WTC11 (cell line): ENCODE measurements at regions of chr21 and their contacts with region 1.

Region 1: DNA sequence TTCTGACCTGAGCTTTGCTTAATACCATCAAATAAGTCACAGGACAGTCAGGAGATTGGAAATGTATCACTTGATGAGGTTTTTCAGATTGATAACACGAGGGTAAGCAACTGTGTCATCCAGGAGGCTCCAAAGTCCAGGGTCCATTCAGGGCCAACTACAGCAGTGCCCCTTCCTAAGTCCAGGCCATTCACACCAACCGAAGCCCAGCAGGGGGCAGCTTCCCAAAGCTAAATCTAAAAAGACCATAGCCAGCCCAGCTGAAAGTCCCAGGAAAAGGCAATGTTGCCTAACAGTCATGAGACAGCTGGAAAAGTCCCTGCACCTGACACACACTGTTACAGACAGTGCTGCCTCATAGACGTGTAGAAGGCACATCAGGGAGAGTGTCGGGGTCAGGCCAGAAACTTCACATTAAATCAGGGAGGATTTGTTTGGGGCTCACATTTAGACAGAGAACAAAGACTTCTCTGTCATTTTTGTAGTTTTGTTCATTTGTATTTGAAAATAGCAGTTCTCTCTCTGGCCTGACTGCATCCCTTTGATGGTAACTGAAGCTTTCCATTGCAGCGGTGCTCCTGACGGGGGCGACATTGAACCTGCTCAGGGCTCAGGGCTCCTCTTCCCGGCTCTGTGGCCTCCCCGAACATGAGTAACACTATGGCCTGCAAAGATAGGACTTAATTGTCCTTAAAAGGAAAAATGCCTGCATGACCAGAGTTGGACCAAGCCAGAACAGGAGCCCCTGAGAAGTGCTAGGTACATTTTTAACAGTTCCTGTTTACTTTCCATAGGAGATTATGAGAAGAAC is 200.4 kb downstream of the NRIP1 start:
- DNase-seq: peak; percentile 77
- ATAC-seq: peak; percentile 99
- H3K4me3 Mint-ChIP-seq: no peak overlapping the region
- H3K27ac Mint-ChIP-seq: no peak overlapping the region
- H3K4me1 Mint-ChIP-seq: peaks cover 26% of the 10 kb centered on the region
- H3K27me3 Mint-ChIP-seq: no peaks in the 10 kb centered on the region; the same call in none of the 2 replicates
- CTCF ChIP-seq: no peak

Region 2: DNA sequence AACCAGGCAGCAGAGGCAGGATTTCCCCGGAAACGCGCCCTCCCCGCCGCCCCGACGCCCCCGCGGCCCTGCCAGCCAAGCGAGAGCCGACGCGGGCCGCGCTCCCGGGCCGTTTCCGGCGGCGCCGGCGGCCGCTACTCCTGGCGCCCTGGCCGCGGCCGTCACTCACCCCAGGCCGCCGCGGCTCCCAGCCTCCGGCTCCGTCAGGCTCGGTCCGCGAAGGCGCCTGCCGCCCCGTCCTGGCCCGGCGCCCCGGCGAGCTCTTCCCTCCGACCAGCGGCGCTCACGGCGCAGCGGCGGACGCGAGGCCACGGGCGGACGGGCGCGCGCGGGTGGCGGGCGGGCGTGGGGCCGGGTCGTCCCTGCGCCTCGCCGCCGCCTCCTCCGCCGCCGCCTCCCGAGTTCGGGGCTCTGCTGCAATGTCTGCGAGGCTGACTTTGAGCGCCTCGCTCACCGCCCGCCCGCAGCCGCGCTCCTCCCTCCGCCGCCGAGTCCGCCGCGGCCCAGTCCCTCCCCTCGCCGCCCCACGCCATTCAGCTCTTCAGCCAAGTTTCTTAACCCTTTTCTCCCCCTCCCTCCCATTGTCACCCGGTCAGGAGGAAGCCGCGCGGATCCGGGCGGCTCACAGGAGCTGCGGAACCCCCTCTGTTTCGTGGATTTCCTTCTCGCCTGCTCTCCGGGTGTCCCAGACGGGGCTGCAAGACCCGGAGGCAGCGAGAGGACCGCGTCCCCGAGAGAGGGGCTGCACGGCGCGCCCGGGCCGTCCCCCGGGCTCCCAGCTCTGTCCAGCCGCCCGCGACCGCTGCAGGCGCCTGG is 200.4 kb after region 1 on chr21 and contains the start of gene NRIP1:
- CTCF ChIA-PET with region 1: interaction called, 10 read pairs
- POLR2A ChIA-PET with region 1: no interaction called
- DNase-seq: peak; percentile 74
- ATAC-seq: peak; percentile 75
- H3K4me3 Mint-ChIP-seq: peak within 1 kb of the TSS; percentile 96
- H3K27ac Mint-ChIP-seq: peak within 1 kb of the TSS; percentile 92
- H3K4me1 Mint-ChIP-seq: peaks cover 45% of the 10 kb centered on the region
- H3K27me3 Mint-ChIP-seq: peaks cover 40% of the 10 kb centered on the region
- CTCF ChIP-seq: no peak
- total RNA-seq, gene NRIP1: 8.0 to 10.3 TPM (median 8.8 TPM) in 3 replicates